MCF 10A (cell line): ENCODE measurements at regions of chr7 and their contacts with region 1.

Region 1: DNA sequence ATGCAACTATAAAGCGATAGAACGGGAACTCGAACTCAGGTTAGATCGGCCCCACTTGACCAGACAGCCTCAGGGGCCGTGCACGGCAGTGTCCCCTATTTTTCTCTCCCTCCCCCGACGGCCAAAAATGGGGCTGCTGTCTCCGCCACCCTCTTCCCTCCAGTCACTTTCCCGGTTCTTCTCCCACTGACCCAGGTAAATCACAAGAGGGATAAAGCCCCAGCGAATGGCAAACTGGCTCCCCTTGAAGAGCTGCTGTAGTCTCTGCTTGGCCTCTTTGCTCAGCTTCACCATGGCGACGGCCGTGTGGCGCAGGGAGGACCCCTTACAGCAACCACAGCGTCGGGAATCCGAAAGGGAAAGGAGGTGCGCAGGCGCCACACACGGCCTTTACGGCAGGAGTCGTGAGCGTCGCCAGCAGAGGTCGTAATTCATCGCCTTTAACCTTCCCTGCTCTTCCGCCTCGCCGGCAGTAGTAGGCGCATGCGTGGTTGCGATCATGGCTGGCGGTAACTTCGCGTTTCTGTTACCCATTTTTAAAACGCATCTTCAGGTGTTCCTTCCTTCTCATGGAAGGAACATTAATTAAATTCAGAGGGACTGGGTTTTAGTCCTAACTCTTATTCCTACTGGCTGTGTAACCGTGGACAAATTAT is at the start of gene TOMM7:
- DNase-seq: peak; percentile 94
- H3K4me3 Mint-ChIP-seq: peak within 1 kb of the TSS; percentile 94
- H3K27ac Mint-ChIP-seq: peak within 1 kb of the TSS; percentile 98
- H3K4me1 Mint-ChIP-seq: peaks cover 13% of the 10 kb centered on the region
- H3K27me3 Mint-ChIP-seq: no peaks in the 10 kb centered on the region
- CTCF ChIP-seq: no peak
- total RNA-seq, gene TOMM7: 376 and 409 TPM in 2 replicates

Region 2: DNA sequence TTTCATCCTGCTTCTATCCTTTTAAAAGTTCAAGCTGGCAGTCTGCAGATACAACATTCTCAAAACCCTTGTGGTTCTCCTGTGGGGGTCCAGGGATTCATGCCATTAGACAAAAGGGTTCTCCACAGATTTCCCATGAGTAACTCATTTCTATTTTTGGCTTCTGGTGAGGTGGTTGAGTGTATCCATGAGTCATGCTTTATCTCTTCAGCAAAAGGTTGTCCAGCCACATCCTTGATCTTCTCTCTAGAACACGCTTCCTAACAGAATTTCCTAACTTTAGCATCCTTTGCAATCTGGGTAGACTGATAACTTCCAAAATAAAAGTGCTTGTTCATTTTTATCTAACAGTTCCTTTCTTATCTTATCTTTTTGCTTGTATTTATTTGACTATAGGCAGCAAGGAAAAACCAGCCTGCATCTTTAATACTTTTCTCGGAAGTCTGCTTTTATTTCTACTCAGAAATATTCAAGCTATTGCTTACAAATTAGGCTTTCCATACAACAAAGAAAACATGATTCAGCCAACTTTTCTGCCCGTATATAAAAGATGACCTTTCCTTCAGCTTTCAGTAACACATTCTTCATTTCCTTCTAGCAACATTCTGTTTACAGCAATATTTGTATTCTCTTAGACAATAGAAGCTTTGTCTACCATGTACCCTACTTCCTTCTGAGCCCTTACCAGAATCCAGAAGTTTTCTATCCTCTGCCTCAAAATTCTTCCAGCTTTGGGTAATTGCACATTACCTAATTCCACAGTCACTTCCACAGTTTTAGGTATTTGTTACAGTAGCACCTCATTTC is 175.0 kb before region 1 on chr7:
- CTCF ChIA-PET with region 1: no interaction called
- POLR2A ChIA-PET with region 1: no interaction called
- intact Hi-C with region 1: no loop called
- DNase-seq: peak; percentile 38
- H3K4me3 Mint-ChIP-seq: no peak overlapping the region
- H3K27ac Mint-ChIP-seq: no peak overlapping the region
- H3K4me1 Mint-ChIP-seq: peaks cover 11% of the 10 kb centered on the region
- H3K27me3 Mint-ChIP-seq: no peaks in the 10 kb centered on the region
- CTCF ChIP-seq: no peak

Region 3: GRCh38 chr7:22833113-22833855 is 10.7 kb after region 1 on chr7:
- CTCF ChIA-PET with region 1: interaction called, 3 read pairs
- POLR2A ChIA-PET with region 1: interaction called, 18 read pairs
- intact Hi-C with region 1: no loop called
- DNase-seq: no peak
- H3K4me3 Mint-ChIP-seq: no peak overlapping the region
- H3K27ac Mint-ChIP-seq: no peak overlapping the region
- H3K4me1 Mint-ChIP-seq: no peaks in the 10 kb centered on the region
- H3K27me3 Mint-ChIP-seq: no peaks in the 10 kb centered on the region
- CTCF ChIP-seq: no peak

Region 4: GRCh38 chr7:22854158-22855048 is 31.8 kb after region 1 on chr7:
- CTCF ChIA-PET with region 1: interaction called, 4 read pairs
- POLR2A ChIA-PET with region 1: interaction called, 34 read pairs
- intact Hi-C with region 1: loop called (anchors 1 kb)
- DNase-seq: peak; percentile 91
- H3K4me3 Mint-ChIP-seq: peak overlapping the region; percentile 90
- H3K27ac Mint-ChIP-seq: peak overlapping the region; percentile 52
- H3K4me1 Mint-ChIP-seq: peaks cover 19% of the 10 kb centered on the region
- H3K27me3 Mint-ChIP-seq: no peaks in the 10 kb centered on the region
- CTCF ChIP-seq: peak; percentile 86

Region 5: DNA sequence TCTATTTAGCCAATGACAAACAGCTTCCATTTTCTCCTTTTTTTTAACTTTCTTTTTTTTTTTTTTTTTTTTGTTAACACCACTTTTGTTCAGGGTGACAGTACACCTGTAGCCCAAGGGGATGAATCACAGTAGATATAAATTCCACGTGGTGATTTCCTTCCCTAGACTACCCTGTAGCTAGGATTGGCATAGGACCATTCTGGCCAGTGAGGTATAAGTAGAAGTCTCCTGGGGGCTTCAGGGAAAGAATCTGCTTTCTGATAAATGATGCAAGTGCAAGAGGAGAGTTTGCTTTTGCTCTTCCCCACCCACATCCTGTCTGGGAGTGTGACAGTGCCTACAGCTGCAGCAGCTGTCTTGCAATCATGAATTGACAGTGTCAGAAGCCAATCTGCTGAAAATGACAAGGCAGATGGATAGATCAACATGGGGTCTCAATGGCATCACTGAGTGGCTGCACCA is 63.2 kb after region 1 on chr7:
- CTCF ChIA-PET with region 1: no interaction called
- POLR2A ChIA-PET with region 1: no interaction called
- intact Hi-C with region 1: no loop called
- DNase-seq: no peak
- H3K4me3 Mint-ChIP-seq: no peak overlapping the region
- H3K27ac Mint-ChIP-seq: no peak overlapping the region
- H3K4me1 Mint-ChIP-seq: no peaks in the 10 kb centered on the region
- H3K27me3 Mint-ChIP-seq: no peaks in the 10 kb centered on the region
- CTCF ChIP-seq: no peak

Region 6: GRCh38 chr7:22920672-22921071 is 98.1 kb after region 1 on chr7:
- CTCF ChIA-PET with region 1: no interaction called
- POLR2A ChIA-PET with region 1: no interaction called
- intact Hi-C with region 1: no loop called
- DNase-seq: peak; percentile 22
- H3K4me3 Mint-ChIP-seq: no peak overlapping the region
- H3K27ac Mint-ChIP-seq: no peak overlapping the region
- H3K4me1 Mint-ChIP-seq: peaks cover 6% of the 10 kb centered on the region
- H3K27me3 Mint-ChIP-seq: no peaks in the 10 kb centered on the region
- CTCF ChIP-seq: no peak